ENCODE measurements at regions of chr9 and their contacts with region 1.

Region 1: DNA sequence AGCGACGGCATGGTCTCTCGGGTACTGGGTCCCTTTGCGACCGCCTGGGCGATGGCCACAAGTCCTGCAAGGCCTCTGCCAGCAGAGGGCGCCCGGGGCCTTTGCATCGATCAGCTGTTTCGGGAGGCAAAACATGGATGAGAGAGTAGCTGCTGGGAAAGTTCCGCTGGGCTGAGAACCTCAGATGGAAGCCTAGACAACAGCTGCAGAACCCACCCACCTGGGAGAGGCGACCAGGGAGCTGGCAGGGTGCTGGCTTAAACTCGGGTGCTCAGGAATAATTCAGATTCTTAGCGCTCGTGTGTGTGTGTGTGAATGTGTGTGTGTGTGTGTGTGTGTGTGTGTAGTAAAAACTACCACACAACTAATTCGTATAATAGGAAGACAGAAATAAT is 50.0 kb downstream of the TRIM32 start:
- DNase-seq: peak; percentile 58 to 92
- H3K4me3 ChIP-seq: no peak overlapping the region
- CTCF ChIP-seq: no peak
- POLR2A ChIP-seq: no peak

Region 2: DNA sequence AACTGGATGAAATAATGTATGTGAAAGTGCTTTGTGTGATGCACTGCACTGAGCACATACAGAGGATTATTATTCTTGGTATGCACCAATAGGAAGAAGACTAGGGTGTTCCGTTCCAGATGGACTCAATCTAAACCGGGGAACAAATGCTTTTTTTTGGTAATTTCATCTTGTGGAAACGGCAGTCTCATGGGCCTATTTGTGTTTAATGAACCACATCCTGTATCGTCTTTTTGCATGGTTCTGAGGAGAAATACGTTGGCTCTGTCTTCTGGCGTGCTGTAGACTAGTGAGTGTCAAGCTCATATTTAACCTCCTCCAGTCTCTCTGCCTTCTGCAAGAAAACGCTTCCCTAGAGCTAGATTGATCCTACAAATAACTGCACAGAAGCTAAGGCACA is 20.0 kb before region 1 on chr9:
- intact Hi-C with region 1: no loop called
- DNase-seq: no peak
- H3K4me3 ChIP-seq: no peak overlapping the region
- CTCF ChIP-seq: no peak
- POLR2A ChIP-seq: no peak

Region 3: GRCh38 chr9:116860509-116861120 is 123.5 kb after region 1 on chr9:
- intact Hi-C with region 1: loop called (anchors 5 kb)
- DNase-seq: peak; percentile 53 to 86
- H3K4me3 ChIP-seq: no peak overlapping the region
- CTCF ChIP-seq: no peak
- POLR2A ChIP-seq: no peak